ENCODE measurements at regions of chr1 and their contacts with region 1.

Region 1: GRCh38 chr1:17236779-17237560 is 11.9 kb upstream of the PADI3 start:
- DNase-seq: peak; percentile 83
- H3K4me3 ChIP-seq: no peak overlapping the region
- H3K27ac ChIP-seq: no peak overlapping the region
- H3K4me1 ChIP-seq: peaks cover 0 to 16% (median 13%) of the 10 kb centered on the region in 4 donors
- H3K27me3 ChIP-seq: no peaks in the 10 kb centered on the region
- CTCF ChIP-seq: peak; percentile 46 to 88 (median 82)
- EP300 ChIP-seq: no peak
- POLR2A ChIP-seq: no peak

Region 2: GRCh38 chr1:17059739-17060460 is 177.1 kb before region 1 on chr1:
- intact Hi-C with region 1: loop called (anchors 1 kb)
- DNase-seq: no peak
- H3K4me3 ChIP-seq: no peak overlapping the region
- H3K27ac ChIP-seq: no peak overlapping the region
- H3K4me1 ChIP-seq: peaks cover 0 to 13% (median 0%) of the 10 kb centered on the region in 4 donors
- H3K27me3 ChIP-seq: no peaks in the 10 kb centered on the region
- CTCF ChIP-seq: peak in 3 of 4 experiments; percentile 23 to 48 (median 47)
- EP300 ChIP-seq: no peak
- POLR2A ChIP-seq: no peak

Measured in sigmoid colon (tissue), 7 donors.